Activated CD4-positive, alpha-beta T cell treated with anti-CD3 and anti-CD28 coated beads, Interleukin-2, amount 10 ng/mL, durations not matched to agents 7 days and 5 days (primary cell): ENCODE measurements at regions of chr9 and their contacts with region 1.

Region 1: GRCh38 chr9:72486594-72486955 is 34.8 kb upstream of the TMC1 start:
- DNase-seq: no peak
- H3K4me3 Mint-ChIP-seq: no peak overlapping the region
- H3K27ac Mint-ChIP-seq: no peak overlapping the region
- H3K4me1 Mint-ChIP-seq: no peaks in the 10 kb centered on the region
- H3K27me3 Mint-ChIP-seq: peaks cover 3% of the 10 kb centered on the region

Region 2: DNA sequence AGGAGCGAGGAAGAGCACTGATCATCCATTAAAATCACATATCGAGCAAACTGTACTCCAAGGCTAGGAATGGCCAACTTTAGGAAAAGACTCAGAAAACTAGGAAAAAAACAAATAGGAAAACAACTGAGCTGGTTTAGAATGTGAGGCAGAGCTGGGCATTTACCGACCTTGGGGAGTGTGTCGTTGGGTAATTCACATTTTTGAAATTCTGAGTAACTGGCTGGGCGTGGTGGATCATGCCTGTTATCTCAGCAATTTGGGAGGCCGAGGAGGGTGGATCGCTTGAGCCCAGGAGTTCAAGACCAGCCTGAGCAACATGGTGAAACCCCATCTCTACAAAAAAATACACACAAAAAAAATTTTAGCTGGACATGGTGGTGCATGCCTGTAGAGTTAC is 191.6 kb before region 1 on chr9:
- CTCF ChIA-PET with region 1: no interaction called
- POLR2A ChIA-PET with region 1: no interaction called
- DNase-seq: no peak
- H3K4me3 Mint-ChIP-seq: no peak overlapping the region
- H3K27ac Mint-ChIP-seq: no peak overlapping the region
- H3K4me1 Mint-ChIP-seq: peaks cover 2% of the 10 kb centered on the region
- H3K27me3 Mint-ChIP-seq: peaks cover 5% of the 10 kb centered on the region

Region 3: GRCh38 chr9:72322259-72322658 is 164.3 kb before region 1 on chr9:
- CTCF ChIA-PET with region 1: no interaction called
- POLR2A ChIA-PET with region 1: interaction called, 10 read pairs
- DNase-seq: no peak
- H3K4me3 Mint-ChIP-seq: no peak overlapping the region
- H3K27ac Mint-ChIP-seq: no peak overlapping the region
- H3K4me1 Mint-ChIP-seq: no peaks in the 10 kb centered on the region
- H3K27me3 Mint-ChIP-seq: peaks cover 1% of the 10 kb centered on the region

Region 4: GRCh38 chr9:72473474-72474261 is 12.9 kb before region 1 on chr9:
- CTCF ChIA-PET with region 1: no interaction called
- POLR2A ChIA-PET with region 1: no interaction called
- DNase-seq: no peak
- H3K4me3 Mint-ChIP-seq: no peak overlapping the region
- H3K27ac Mint-ChIP-seq: peak overlapping the region; percentile 23
- H3K4me1 Mint-ChIP-seq: peaks cover 42% of the 10 kb centered on the region
- H3K27me3 Mint-ChIP-seq: no peaks in the 10 kb centered on the region